ENCODE measurements at regions of chr9 and their contacts with region 1.

Region 1: DNA sequence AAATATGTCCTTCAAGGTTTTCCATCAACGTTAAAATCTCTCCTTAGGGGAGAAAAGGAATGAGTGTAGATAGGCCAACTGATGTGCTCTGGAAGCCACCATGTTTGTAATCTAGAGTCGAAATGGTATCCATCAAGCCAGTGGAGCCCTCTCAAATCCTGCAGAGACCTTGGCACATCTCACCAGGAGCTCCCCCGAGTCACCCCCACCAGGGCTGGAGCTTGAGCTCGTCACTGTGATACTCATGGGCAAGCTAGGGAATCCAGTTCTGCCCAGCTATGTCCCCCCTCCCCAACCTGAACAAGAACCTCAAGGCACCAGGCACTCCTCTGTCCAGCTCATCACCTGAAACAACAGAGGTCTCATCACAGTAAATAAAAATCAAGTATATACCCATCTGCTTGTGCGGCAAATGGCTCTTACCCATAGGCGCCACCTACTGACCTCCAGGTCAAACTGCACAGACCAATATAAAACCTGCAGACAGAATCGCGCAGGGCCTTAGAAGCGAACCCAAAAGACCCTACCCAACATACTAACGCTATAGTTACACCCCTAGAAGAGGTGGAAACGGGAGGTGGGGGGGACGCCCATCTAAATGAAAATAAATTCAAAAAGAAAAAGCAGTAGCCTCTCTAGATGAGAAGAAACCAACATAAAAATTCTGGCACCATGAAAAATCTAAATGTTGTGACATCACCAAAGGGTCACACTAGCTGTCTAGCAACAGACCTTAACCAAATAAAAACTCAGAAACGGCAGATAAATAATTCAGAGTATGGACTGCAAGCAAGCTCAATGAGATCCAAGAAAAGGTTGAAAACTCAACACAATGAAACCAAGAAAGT is 75.0 kb downstream of the TTC39B start:
- DNase-seq: no peak
- H3K4me3 Mint-ChIP-seq: no peak overlapping the region
- H3K27ac Mint-ChIP-seq: no peak overlapping the region
- H3K4me1 Mint-ChIP-seq: peaks cover 27% of the 10 kb centered on the region
- H3K27me3 Mint-ChIP-seq: no peaks in the 10 kb centered on the region

Region 2: GRCh38 chr9:15191378-15191777 is 40.6 kb before region 1 on chr9:
- intact Hi-C with region 1: loop called (anchors 2 kb)
- DNase-seq: peak; percentile 73
- H3K4me3 Mint-ChIP-seq: peak overlapping the region; percentile 12
- H3K27ac Mint-ChIP-seq: no peak overlapping the region
- H3K4me1 Mint-ChIP-seq: peaks cover 15% of the 10 kb centered on the region
- H3K27me3 Mint-ChIP-seq: no peaks in the 10 kb centered on the region

Region 3: GRCh38 chr9:15262581-15262980 is 30.6 kb after region 1 on chr9:
- intact Hi-C with region 1: loop called (anchors 5 kb)
- DNase-seq: no peak
- H3K4me3 Mint-ChIP-seq: no peak overlapping the region
- H3K27ac Mint-ChIP-seq: no peak overlapping the region
- H3K4me1 Mint-ChIP-seq: peaks cover 11% of the 10 kb centered on the region
- H3K27me3 Mint-ChIP-seq: no peaks in the 10 kb centered on the region

Region 4: GRCh38 chr9:15306757-15307534 is 74.9 kb after region 1 on chr9 and contains the start of gene TTC39B:
- intact Hi-C with region 1: loop called (anchors 1 kb)
- DNase-seq: peak; percentile 96
- H3K4me3 Mint-ChIP-seq: peak within 1 kb of the TSS; percentile 99
- H3K27ac Mint-ChIP-seq: peak within 1 kb of the TSS; percentile 97
- H3K4me1 Mint-ChIP-seq: peaks cover 51% of the 10 kb centered on the region
- H3K27me3 Mint-ChIP-seq: no peaks in the 10 kb centered on the region
- total RNA-seq, gene TTC39B: 20.3 and 22.2 TPM in 2 replicates

Measured in activated CD4-positive, alpha-beta T cell treated with anti-CD3 and anti-CD28 coated beads, Interleukin-2, amount 10 ng/mL, durations not matched to agents 24 days and 14 days (primary cell).